Endothelial cell of umbilical vein (primary cell): ENCODE measurements at regions of chr19 and their contacts with region 1.

Region 1: GRCh38 chr19:10000171-10000826 is 10.0 kb downstream of the COL5A3 start:
- DNase-seq: peak; percentile 68
- H3K4me3 ChIP-seq: no peak overlapping the region
- H3K27ac ChIP-seq: no peak overlapping the region
- H3K4me1 ChIP-seq: no peaks in the 10 kb centered on the region
- H3K27me3 ChIP-seq: no peaks in the 10 kb centered on the region
- CTCF ChIP-seq: peak; percentile 76 to 85
- POLR2A ChIP-seq: no peak

Region 2: GRCh38 chr19:9939301-9939913 is 60.9 kb before region 1 on chr19:
- CTCF ChIA-PET with region 1: interaction called, 12 read pairs
- POLR2A ChIA-PET with region 1: no interaction called
- dilution Hi-C with region 1: no loop called
- intact Hi-C with region 1: loop called (anchors 1 kb)
- DNase-seq: no peak
- H3K4me3 ChIP-seq: no peak overlapping the region
- H3K27ac ChIP-seq: no peak overlapping the region
- H3K4me1 ChIP-seq: no peaks in the 10 kb centered on the region
- H3K27me3 ChIP-seq: peaks cover 17 to 18% of the 10 kb centered on the region in 2 experiments
- CTCF ChIP-seq: no peak
- POLR2A ChIP-seq: no peak

Region 3: DNA sequence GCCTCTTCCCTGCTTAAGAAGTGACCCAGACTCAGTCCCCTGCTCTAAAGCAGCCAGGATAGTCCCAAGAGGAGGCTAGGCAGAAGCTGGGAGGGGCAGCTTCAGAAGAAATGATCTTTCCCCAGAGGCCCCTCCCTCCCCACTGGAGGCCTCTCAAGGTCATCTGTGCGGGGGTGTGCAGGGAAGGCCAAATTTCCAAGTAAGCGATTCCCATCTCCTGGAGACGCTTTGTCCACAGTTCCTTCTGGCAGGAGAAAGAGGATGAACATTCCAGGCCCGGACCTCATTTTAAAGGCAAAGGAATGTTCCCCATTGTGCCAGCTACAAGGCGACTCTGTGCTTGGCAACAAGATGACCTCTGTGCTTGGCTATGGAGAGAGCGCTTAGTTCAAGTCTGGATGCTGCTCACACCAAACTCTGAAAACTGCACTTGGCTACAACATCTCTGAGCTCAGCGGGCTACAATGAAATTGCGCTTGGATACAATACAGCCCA is 13.5 kb before region 1 on chr19:
- CTCF ChIA-PET with region 1: interaction called, 69 read pairs
- POLR2A ChIA-PET with region 1: no interaction called
- dilution Hi-C with region 1: no loop called
- intact Hi-C with region 1: no loop called
- DNase-seq: no peak
- H3K4me3 ChIP-seq: no peak overlapping the region
- H3K27ac ChIP-seq: no peak overlapping the region
- H3K4me1 ChIP-seq: no peaks in the 10 kb centered on the region
- H3K27me3 ChIP-seq: no peaks in the 10 kb centered on the region
- CTCF ChIP-seq: no peak
- POLR2A ChIP-seq: no peak

Region 4: DNA sequence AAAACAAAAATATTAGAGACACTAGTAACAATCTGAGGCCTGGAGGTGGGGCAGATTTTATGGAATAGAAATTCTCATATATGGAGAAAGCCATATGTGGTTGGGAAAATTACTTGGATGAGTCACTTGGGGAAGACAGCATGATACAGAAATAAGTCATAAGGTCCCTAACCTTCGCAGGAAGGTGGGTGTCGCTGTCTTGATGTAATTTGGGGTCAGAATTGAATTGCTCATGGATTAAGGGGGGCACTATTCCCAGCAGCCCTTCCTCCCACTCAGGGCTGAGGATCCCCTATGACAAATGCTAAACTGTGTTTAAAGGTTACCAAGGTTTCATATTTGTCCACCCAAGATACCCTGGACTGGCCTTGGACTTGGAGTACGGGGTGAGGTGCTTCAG is 18.0 kb after region 1 on chr19:
- CTCF ChIA-PET with region 1: interaction called, 11 read pairs
- POLR2A ChIA-PET with region 1: no interaction called
- dilution Hi-C with region 1: no loop called
- intact Hi-C with region 1: no loop called
- DNase-seq: no peak
- H3K4me3 ChIP-seq: no peak overlapping the region
- H3K27ac ChIP-seq: no peak overlapping the region
- H3K4me1 ChIP-seq: no peaks in the 10 kb centered on the region
- H3K27me3 ChIP-seq: no peaks in the 10 kb centered on the region
- CTCF ChIP-seq: no peak
- POLR2A ChIP-seq: no peak

Region 5: DNA sequence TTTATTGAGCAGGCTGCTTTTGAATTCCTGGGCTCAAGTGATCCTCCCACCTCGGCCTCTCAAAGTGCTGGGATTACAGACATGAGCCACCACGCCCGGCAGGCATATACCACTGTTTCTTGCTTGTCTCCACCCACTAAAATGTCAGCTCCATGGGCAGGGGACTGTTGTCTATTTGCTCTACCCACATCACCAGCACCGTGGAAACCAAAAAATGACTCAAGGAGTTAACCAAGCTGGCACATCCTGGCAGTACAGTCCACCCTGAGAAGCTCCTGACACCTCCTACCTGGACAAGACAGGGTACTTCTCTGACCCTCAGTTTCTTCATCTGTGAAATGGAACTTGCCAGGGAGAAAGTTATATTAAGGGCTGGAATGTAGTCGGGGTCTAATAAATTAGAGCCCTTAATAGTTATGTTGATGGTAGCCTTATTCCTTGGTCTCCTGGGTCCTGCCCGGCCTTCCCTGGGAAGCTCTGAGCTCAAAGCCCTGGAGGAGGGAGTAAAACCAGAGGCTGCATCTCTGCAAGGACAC is 26.9 kb after region 1 on chr19:
- CTCF ChIA-PET with region 1: interaction called, 35 read pairs
- POLR2A ChIA-PET with region 1: no interaction called
- dilution Hi-C with region 1: no loop called
- intact Hi-C with region 1: loop called (anchors 1 kb)
- DNase-seq: no peak
- H3K4me3 ChIP-seq: no peak overlapping the region
- H3K27ac ChIP-seq: no peak overlapping the region
- H3K4me1 ChIP-seq: peaks cover 4% of the 10 kb centered on the region
- H3K27me3 ChIP-seq: peaks cover 3 to 4% of the 10 kb centered on the region in 2 experiments
- CTCF ChIP-seq: no peak
- POLR2A ChIP-seq: no peak